Activated CD4-positive, alpha-beta memory T cell treated with anti-CD3 and anti-CD28 coated beads, Interleukin-2, amount 10 ng/mL, durations not matched to agents 7 days and 5 days (primary cell): ENCODE measurements at regions of chr7 and their contacts with region 1.

Region 1: GRCh38 chr7:106285051-106285854 is 470 bp upstream of the NAMPT start:
- DNase-seq: peak; percentile 97
- H3K4me3 Mint-ChIP-seq: peak overlapping the region; percentile 96
- H3K27ac Mint-ChIP-seq: peak overlapping the region; percentile 99
- H3K4me1 Mint-ChIP-seq: peaks cover 36% of the 10 kb centered on the region
- H3K27me3 Mint-ChIP-seq: no peaks in the 10 kb centered on the region

Region 2: GRCh38 chr7:106112117-106112971 is 172.9 kb before region 1 on chr7 and contains the start of gene SYPL1:
- CTCF ChIA-PET with region 1: no interaction called
- POLR2A ChIA-PET with region 1: interaction called, 18 read pairs
- DNase-seq: peak; percentile 91
- H3K4me3 Mint-ChIP-seq: peak within 1 kb of the TSS; percentile 82
- H3K27ac Mint-ChIP-seq: peak within 1 kb of the TSS; percentile 85
- H3K4me1 Mint-ChIP-seq: peaks cover 45% of the 10 kb centered on the region
- H3K27me3 Mint-ChIP-seq: peaks cover 14% of the 10 kb centered on the region
- total RNA-seq, gene SYPL1: 37.5 to 38.8 TPM

Region 3: DNA sequence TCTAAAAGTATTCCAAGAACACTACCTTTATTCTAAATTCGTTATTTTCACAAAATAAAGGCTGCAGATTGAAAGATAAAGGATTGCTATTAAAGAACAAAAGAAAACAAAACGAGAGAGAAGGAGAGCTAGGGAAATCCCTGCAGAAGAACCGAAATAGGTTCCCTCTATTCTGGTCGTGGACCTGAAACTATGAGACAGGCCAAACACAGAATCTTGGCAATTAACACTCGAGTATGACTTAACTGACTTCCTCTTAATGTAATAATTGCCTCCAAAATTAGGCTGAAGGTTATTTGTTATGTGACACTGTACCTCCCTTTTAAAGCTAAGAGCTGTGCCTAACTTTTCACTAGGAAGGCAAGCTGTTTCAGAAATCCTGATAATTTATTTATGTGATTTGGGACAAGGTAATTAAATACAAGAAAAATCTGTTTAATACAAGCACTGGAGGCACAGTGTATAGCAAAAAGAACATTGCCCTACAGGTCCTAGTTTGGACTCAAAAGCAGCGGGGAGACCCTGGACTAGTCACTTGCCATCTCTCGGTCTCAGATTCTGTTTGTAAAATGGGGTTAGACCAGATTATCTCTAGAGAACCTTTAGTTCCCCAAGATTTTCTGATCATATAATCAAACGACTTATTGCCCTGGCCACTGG is 12.1 kb before region 1 on chr7:
- CTCF ChIA-PET with region 1: interaction called, 3 read pairs
- POLR2A ChIA-PET with region 1: interaction called, 37 read pairs
- DNase-seq: no peak
- H3K4me3 Mint-ChIP-seq: no peak overlapping the region
- H3K27ac Mint-ChIP-seq: no peak overlapping the region
- H3K4me1 Mint-ChIP-seq: peaks cover 17% of the 10 kb centered on the region
- H3K27me3 Mint-ChIP-seq: no peaks in the 10 kb centered on the region

Region 4: DNA sequence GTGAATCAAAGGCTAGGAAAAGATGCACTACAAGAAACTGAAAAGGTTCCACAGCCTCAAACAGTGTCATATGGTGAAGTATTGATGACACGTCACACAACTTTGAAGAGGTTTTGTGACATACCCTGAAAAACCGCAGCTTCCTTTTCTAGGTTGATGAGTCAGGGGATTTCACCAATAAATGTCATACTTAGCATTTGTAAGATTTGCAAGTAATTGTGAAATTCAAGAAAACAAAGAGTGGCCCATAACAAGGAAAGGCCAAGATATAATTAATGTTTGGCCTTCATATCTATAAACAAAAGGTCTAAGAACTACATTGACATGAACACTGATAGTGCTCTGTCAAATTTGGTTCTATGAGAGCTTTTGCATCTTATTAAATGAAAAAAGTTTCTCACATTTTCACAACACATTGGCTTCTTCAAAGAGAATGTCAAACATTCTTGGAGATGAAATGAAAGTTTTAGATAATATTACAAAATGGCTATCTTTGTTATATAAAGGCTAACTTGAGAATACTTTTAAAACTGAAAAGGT is 61.5 kb after region 1 on chr7:
- CTCF ChIA-PET with region 1: interaction called, 6 read pairs
- POLR2A ChIA-PET with region 1: interaction called, 68 read pairs
- DNase-seq: peak; percentile 68
- H3K4me3 Mint-ChIP-seq: peak overlapping the region; percentile 26
- H3K27ac Mint-ChIP-seq: peak overlapping the region; percentile 94
- H3K4me1 Mint-ChIP-seq: peaks cover 43% of the 10 kb centered on the region
- H3K27me3 Mint-ChIP-seq: peaks cover 2% of the 10 kb centered on the region

Region 5: GRCh38 chr7:106372595-106373318 is 87.5 kb after region 1 on chr7:
- CTCF ChIA-PET with region 1: no interaction called
- POLR2A ChIA-PET with region 1: no interaction called
- DNase-seq: no peak
- H3K4me3 Mint-ChIP-seq: no peak overlapping the region
- H3K27ac Mint-ChIP-seq: no peak overlapping the region
- H3K4me1 Mint-ChIP-seq: peaks cover 10% of the 10 kb centered on the region
- H3K27me3 Mint-ChIP-seq: no peaks in the 10 kb centered on the region

Region 6: GRCh38 chr7:106461993-106462859 is 177.0 kb after region 1 on chr7:
- CTCF ChIA-PET with region 1: interaction called, 11 read pairs
- POLR2A ChIA-PET with region 1: interaction called, 6 read pairs
- DNase-seq: no peak
- H3K4me3 Mint-ChIP-seq: no peak overlapping the region
- H3K27ac Mint-ChIP-seq: no peak overlapping the region
- H3K4me1 Mint-ChIP-seq: peaks cover 2% of the 10 kb centered on the region
- H3K27me3 Mint-ChIP-seq: no peaks in the 10 kb centered on the region

Region 7: GRCh38 chr7:106717955-106718871 is 433.0 kb after region 1 on chr7:
- CTCF ChIA-PET with region 1: no interaction called
- POLR2A ChIA-PET with region 1: interaction called, 11 read pairs
- DNase-seq: peak; percentile 75
- H3K4me3 Mint-ChIP-seq: no peak overlapping the region
- H3K27ac Mint-ChIP-seq: no peak overlapping the region
- H3K4me1 Mint-ChIP-seq: peaks cover 20% of the 10 kb centered on the region
- H3K27me3 Mint-ChIP-seq: no peaks in the 10 kb centered on the region